Activated naive CD4-positive, alpha-beta T cell treated with anti-CD3 and anti-CD28 coated beads, Interleukin-2, amount 10 ng/mL, durations not matched to agents 7 days and 5 days (primary cell): ENCODE measurements at regions of chr17 and their contacts with region 1.

Region 1: GRCh38 chr17:1331708-1332107 is 52.2 kb downstream of the TRARG1 start:
- DNase-seq: peak; percentile 70
- H3K4me3 Mint-ChIP-seq: no peak overlapping the region
- H3K27ac Mint-ChIP-seq: peak overlapping the region; percentile 77
- H3K4me1 Mint-ChIP-seq: peaks cover 13% of the 10 kb centered on the region
- H3K27me3 Mint-ChIP-seq: peaks cover 7% of the 10 kb centered on the region

Region 2: GRCh38 chr17:1267471-1267947 is 64.2 kb before region 1 on chr17:
- CTCF ChIA-PET with region 1: interaction called, 19 read pairs
- DNase-seq: no peak
- H3K4me3 Mint-ChIP-seq: peak overlapping the region; percentile 67
- H3K27ac Mint-ChIP-seq: peak overlapping the region; percentile 73
- H3K4me1 Mint-ChIP-seq: peaks cover 26% of the 10 kb centered on the region
- H3K27me3 Mint-ChIP-seq: peaks cover 85% of the 10 kb centered on the region

Region 3: DNA sequence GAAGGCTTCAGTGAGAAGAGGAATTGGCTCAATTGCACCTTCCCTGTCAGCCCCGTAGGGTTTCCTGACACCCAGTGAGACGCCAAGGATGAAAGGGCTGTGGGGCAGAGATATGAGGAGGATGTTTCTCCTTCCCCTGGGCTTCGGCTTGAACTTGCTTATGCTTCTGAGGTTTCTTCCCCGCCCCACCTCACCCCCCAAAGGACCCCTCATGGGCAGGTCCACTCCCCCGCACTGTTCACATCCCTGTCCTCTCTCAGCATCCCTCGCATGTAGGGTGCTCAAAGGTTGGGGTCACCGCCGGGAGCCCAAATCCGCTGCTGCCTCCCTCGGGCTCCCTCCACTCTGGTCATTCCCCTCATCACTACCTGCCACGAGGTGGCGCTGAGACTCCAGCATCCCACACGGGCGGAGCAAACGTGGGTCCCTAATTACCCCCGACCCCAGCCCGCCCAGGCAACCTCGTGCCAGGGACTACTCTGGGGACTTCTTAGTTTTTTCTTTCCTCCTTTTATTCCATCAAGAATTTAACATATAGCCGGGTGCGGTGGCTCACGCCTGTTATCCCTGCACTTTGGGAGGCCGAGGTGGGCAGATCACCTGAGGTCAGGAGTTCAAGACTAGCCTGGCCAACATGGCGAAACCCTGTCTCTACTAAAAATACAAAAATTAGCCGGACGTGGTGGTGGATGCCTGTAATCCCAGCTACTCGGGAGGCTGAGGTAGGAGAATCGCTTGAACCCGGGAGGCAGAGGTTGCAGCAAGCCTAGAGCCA is 55.6 kb before region 1 on chr17:
- CTCF ChIA-PET with region 1: interaction called, 35 read pairs
- DNase-seq: peak; percentile 85
- H3K4me3 Mint-ChIP-seq: no peak overlapping the region
- H3K27ac Mint-ChIP-seq: peak overlapping the region; percentile 11
- H3K4me1 Mint-ChIP-seq: peaks cover 14% of the 10 kb centered on the region
- H3K27me3 Mint-ChIP-seq: peaks cover 82% of the 10 kb centered on the region

Region 4: GRCh38 chr17:1298606-1299005 is 33.1 kb before region 1 on chr17:
- CTCF ChIA-PET with region 1: interaction called, 15 read pairs
- DNase-seq: peak; percentile 64
- H3K4me3 Mint-ChIP-seq: no peak overlapping the region
- H3K27ac Mint-ChIP-seq: no peak overlapping the region
- H3K4me1 Mint-ChIP-seq: peaks cover 68% of the 10 kb centered on the region
- H3K27me3 Mint-ChIP-seq: peaks cover 64% of the 10 kb centered on the region